Vagina (tissue), 2 donors: ENCODE measurements at regions of chr18 and their contacts with region 1.

Region 1: DNA sequence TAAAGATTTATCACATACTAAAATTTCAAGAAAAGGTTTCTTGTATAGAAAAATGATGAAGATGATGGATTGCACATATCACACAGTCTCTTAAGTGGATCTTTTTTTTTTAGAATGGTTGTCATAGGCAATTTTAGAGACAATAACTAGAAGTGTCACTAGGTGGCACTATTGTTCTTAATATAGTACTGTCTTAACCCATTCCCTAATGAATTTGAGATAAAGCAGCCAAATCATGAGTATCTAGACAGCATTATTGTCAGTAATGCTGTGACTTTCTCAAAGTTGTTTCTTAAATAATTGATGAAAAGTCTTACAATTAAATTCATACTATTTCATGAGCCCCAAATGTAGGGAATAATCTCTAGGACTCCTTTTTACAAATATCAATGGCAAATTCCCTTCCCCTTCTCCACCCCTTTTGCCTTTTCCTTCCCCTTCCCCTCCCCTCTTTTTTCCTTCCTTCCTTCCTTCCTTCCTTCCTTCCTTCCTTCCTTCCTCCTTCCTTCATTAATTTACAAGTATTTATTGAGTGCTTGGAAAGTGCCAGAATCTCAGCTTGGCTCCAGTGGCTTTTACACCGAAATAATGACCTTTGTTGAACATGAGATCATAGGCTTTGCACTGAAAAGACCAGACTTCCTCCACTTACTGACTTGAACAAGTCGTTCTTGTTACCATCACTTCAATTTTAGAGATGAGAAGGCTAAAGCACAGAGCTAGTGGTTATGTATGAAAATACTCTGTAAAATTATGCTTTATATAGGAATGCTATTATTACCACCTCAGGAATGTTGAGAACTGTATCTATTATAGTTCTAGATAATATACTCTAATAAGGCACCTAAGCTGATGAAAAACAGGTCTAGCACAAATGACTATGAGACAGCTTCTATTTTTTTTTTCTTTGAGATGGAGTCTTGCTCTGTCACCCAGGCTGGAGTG is 19.8 kb downstream of the MYL12B start:
- DNase-seq: no peak
- H3K4me3 ChIP-seq: no peak overlapping the region
- H3K27ac ChIP-seq: no peak overlapping the region
- H3K4me1 ChIP-seq: no peaks in the 10 kb centered on the region
- H3K27me3 ChIP-seq: no peaks in the 10 kb centered on the region
- CTCF ChIP-seq: peak; percentile 57 to 77 (median 74)
- POLR2A ChIP-seq: no peak

Region 2: GRCh38 chr18:3579701-3580100 is 298.0 kb after region 1 on chr18:
- intact Hi-C with region 1: loop called (anchors 5 kb)
- DNase-seq: no peak
- H3K4me3 ChIP-seq: no peak overlapping the region
- H3K27ac ChIP-seq: no peak overlapping the region
- H3K4me1 ChIP-seq: no peaks in the 10 kb centered on the region
- H3K27me3 ChIP-seq: no peaks in the 10 kb centered on the region
- CTCF ChIP-seq: no peak
- POLR2A ChIP-seq: no peak

Region 3: DNA sequence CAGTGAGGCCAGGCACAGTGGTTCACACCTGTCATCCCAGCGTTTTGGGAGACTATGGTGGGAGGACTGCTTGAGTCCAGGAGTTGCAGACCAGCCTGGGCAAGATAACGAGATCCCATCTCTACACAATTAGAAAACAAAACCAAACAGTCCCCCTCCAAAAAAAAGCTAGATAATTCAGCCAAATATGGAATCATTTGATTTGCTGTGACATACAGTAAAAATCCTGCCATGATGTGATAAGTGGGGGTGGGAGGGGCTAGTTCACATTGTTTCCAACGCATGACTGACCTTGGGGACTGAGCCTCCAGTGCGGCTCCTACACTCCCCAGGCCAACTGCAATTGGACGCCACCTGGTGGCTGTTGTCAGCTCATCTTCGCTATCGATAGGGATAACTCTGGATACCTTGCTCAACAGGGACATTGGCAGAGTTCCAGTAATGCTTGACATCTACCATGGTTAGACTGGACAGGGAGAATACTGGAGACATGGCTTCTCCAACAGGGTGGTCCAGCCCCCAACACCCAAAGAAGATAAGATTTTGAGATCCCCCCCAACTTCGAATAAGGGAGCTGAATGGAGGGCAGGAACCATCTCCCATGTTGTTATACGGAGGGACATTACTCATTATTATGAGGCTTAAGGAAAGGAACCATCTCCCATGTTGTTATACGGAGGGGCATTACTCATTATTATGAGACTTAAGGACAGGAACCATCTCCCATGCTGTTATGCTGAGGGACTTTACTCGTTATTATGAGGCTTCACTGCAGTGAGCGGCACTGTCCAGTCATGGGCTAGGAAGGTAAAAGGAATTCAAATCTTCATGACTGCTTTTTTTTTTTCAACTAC is 304.2 kb after region 1 on chr18:
- intact Hi-C with region 1: loop called (anchors 5 kb)
- DNase-seq: peak in 1 of 2 donors; percentile 86
- H3K4me3 ChIP-seq: no peak overlapping the region
- H3K27ac ChIP-seq: no peak overlapping the region
- H3K4me1 ChIP-seq: no peaks in the 10 kb centered on the region
- H3K27me3 ChIP-seq: no peaks in the 10 kb centered on the region
- CTCF ChIP-seq: peak; percentile 52 to 82 (median 79)
- POLR2A ChIP-seq: no peak

Region 4: DNA sequence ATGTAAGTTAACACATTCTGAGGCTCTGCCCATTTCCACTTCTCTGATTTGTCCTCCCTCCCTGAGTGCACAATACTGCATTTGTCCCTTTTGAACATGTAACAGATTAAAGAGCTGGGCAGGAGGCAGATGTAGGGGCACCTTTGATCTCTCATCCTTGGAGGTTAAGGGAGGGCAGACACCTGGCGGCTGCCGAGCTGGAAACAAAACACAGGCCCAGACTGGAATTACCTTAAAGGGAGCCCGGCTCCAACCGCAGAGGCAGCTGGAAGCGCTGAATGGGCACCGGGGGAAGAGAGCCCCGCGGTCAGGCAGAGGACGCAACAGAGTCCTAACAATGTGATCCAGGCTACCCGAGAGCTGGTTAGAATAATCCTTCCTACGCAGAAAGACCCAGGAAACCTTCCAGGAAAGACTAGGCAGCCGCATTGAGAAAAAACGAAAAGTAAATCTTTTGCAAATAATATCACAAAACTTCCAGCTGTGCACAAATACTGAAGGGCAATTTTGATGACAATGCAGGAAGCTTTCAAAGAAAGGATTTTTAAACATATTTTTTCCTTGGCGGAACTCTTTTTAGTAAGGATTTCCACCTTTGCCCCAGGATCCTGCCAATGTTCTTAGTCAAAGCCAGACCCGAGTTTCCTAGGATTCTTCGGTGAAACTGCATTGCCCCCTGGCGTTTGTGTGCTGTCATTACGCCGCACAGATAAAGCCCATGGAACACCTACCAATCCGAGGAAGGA is 384.2 kb after region 1 on chr18:
- intact Hi-C with region 1: loop called (anchors 2 kb)
- DNase-seq: peak in 1 of 2 donors; percentile 91
- H3K4me3 ChIP-seq: peak overlapping the region; percentile 24 to 26
- H3K27ac ChIP-seq: peak overlapping the region; percentile 14
- H3K4me1 ChIP-seq: peaks cover 7% of the 10 kb centered on the region
- H3K27me3 ChIP-seq: no peaks in the 10 kb centered on the region
- CTCF ChIP-seq: peak; percentile 77 to 97 (median 95)
- POLR2A ChIP-seq: no peak